Endothelial cell of umbilical vein (primary cell): ENCODE measurements at regions of chr5 and their contacts with region 1.

Region 1: DNA sequence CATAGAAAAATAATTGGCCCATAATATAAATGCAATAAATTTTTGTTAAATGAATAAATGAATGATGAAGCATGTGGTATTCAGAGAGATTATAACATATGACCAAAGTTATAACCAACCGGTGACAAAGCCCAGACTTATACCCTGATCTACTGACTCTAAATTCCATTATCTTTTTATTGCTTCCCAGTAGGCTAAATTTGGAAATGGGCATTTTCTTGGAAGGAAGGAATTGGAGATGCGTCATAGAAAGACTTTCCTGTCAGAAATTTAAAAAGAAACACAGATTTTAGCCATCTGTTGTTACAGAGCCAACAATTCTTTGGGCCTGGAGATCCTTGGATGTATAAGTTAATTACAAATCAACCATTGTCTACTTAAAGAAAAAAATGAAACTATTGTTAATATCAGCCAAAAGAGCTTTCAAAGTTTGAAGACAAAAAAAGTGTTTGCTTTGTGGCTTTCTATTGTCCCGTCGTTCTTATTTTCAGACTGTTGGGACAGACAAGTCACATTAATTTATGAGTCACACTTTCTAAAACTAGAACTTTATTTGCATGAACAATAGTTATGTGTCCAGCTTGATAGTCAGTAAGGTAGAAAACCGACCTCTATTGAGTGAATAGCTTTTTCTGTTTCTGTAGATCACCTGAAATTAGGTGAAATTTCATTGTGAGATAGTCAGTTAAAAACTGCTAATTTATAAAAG is 428.7 kb downstream of the GABRG2 start:
- DNase-seq: no peak
- H3K4me3 ChIP-seq: no peak overlapping the region
- H3K27ac ChIP-seq: no peak overlapping the region
- H3K4me1 ChIP-seq: no peaks in the 10 kb centered on the region
- H3K27me3 ChIP-seq: no peaks in the 10 kb centered on the region
- CTCF ChIP-seq: no peak
- POLR2A ChIP-seq: no peak

Region 2: GRCh38 chr5:161150441-161150988 is 1345.7 kb before region 1 on chr5:
- CTCF ChIA-PET with region 1: no interaction called
- POLR2A ChIA-PET with region 1: no interaction called
- dilution Hi-C with region 1: no loop called
- intact Hi-C with region 1: no loop called
- DNase-seq: no peak
- H3K4me3 ChIP-seq: no peak overlapping the region
- H3K27ac ChIP-seq: no peak overlapping the region
- H3K4me1 ChIP-seq: no peaks in the 10 kb centered on the region
- H3K27me3 ChIP-seq: no peaks in the 10 kb centered on the region
- CTCF ChIP-seq: no peak
- POLR2A ChIP-seq: no peak

Region 3: DNA sequence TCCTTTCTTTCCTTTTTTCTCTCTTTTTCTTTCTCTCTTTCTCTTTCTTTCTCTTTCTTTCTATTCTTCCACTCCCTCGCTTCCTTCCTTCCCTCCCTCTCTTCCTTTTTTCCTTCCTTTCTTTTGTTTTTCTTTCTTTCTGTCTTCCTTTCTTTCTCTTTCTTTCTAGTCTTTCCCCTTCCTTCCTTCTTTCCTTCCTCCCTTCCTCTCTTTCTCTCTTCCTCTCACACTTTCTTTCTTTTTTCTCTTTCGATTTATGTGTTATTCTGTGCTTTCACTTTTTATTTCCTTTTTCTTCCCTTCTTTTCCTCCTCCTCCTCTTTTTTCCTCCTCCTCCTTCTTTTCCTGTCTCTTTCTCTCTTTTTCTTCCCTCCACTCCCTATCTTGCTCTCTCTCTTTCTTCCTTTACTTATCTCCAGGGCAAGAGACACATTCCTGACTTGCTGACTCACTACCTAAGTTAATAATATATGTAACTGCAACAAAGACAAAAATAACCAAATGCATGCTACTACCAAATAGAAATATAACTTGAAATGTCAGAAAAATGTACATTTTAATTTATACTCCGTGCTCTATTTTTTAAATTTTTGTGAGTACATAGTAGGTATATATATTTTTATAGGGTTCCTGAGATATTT is 16.8 kb after region 1 on chr5:
- CTCF ChIA-PET with region 1: no interaction called
- POLR2A ChIA-PET with region 1: no interaction called
- dilution Hi-C with region 1: no loop called
- intact Hi-C with region 1: loop called (anchors 1 kb)
- DNase-seq: no peak
- H3K4me3 ChIP-seq: no peak overlapping the region
- H3K27ac ChIP-seq: no peak overlapping the region
- H3K4me1 ChIP-seq: no peaks in the 10 kb centered on the region
- H3K27me3 ChIP-seq: no peaks in the 10 kb centered on the region
- CTCF ChIP-seq: no peak
- POLR2A ChIP-seq: no peak

Region 4: DNA sequence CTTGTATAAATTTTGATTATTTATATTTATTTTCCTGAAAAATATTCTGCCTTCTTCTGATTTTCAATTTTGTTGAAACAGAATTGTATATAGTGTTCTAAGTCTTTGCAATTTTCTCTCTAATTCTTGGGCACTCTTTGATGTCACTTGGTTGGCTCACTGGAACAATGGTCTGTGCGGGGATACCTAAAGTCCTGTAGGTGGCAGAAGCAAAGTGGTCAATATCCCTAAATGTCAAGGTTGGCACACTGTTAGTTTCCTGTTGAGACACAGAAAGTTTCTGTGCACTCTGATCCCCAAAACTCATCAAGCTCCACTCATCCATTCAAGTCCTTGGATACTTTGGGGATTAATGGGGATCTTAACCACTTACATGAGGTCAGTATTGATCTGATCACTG is 460.3 kb after region 1 on chr5:
- CTCF ChIA-PET with region 1: no interaction called
- POLR2A ChIA-PET with region 1: no interaction called
- dilution Hi-C with region 1: no loop called
- intact Hi-C with region 1: no loop called
- DNase-seq: no peak
- H3K4me3 ChIP-seq: no peak overlapping the region
- H3K27ac ChIP-seq: no peak overlapping the region
- H3K4me1 ChIP-seq: no peaks in the 10 kb centered on the region
- H3K27me3 ChIP-seq: no peaks in the 10 kb centered on the region
- CTCF ChIP-seq: no peak
- POLR2A ChIP-seq: no peak

Region 5: DNA sequence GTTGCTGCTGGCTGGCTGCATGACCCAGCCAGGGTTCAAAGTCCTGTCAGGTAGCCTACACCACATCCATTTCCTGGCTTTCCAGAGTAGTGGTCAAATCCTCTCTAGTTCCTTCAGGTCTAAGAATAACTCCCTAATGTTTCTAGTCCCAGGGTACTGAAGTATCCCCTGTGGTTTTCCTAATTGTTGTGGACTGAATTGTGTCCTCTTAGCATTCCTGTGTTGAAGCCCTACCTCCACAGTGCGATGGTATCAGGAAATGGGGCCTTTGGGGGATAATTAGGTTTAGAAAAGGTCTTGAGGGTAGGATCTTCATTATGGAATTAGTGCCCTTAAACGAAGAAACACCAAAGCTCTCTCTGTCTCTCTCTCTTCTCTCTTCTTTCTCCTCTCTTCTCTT is 749.3 kb after region 1 on chr5:
- CTCF ChIA-PET with region 1: no interaction called
- POLR2A ChIA-PET with region 1: no interaction called
- dilution Hi-C with region 1: no loop called
- intact Hi-C with region 1: no loop called
- DNase-seq: no peak
- H3K4me3 ChIP-seq: no peak overlapping the region
- H3K27ac ChIP-seq: no peak overlapping the region
- H3K4me1 ChIP-seq: peaks cover 3% of the 10 kb centered on the region
- H3K27me3 ChIP-seq: no peaks in the 10 kb centered on the region
- CTCF ChIP-seq: no peak
- POLR2A ChIP-seq: no peak